CD4-positive, alpha-beta T cell (primary cell): ENCODE measurements at regions of chr3 and their contacts with region 1.

Region 1: GRCh38 chr3:25664810-25665314 is at the start of gene TOP2B:
- DNase-seq: peak; percentile 87 to 97 (median 92)
- ATAC-seq: peak; percentile 89
- H3K4me3 ChIP-seq: peak within 1 kb of the TSS; percentile 94
- H3K4me3 Mint-ChIP-seq: peak within 1 kb of the TSS; percentile 98
- H3K27ac ChIP-seq: peak within 1 kb of the TSS; percentile 92 to 93
- H3K27ac Mint-ChIP-seq: peak within 1 kb of the TSS; percentile 98
- H3K4me1 ChIP-seq: peaks cover 13% of the 10 kb centered on the region
- H3K4me1 Mint-ChIP-seq: peaks cover 49% of the 10 kb centered on the region
- H3K27me3 ChIP-seq: no peaks in the 10 kb centered on the region
- H3K27me3 Mint-ChIP-seq: no peaks in the 10 kb centered on the region
- CTCF ChIP-seq: no peak
- total RNA-seq, gene TOP2B: 79.7 to 80.4 TPM

Region 2: DNA sequence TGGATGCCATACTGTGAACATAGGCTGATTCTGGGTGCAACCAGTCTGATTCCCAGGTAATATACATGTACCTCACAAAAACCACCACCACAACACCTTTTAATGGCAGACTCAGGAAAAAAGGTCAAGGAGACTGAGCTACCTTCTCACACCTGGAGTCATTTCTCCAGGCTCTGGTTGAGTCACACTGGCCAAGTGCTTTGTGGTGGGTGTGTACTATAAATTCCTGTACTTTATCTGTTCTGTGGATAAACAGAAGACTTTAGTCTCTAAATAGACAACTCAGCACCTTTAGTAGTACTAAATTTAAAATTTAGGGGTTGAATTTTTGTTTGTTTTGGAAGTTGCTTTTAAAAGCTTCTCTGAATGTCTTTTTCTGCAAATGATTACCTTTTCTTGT is 46.8 kb before region 1 on chr3:
- CTCF ChIA-PET with region 1: no interaction called
- POLR2A ChIA-PET with region 1: no interaction called
- intact Hi-C with region 1: loop called in 1 of 2 experiments (anchors 2 kb)
- DNase-seq: no peak
- ATAC-seq: no peak
- H3K4me3 ChIP-seq: no peak overlapping the region
- H3K4me3 Mint-ChIP-seq: no peak overlapping the region
- H3K27ac ChIP-seq: no peak overlapping the region
- H3K27ac Mint-ChIP-seq: peak overlapping the region; percentile 56
- H3K4me1 ChIP-seq: no peaks in the 10 kb centered on the region
- H3K4me1 Mint-ChIP-seq: peaks cover 5% of the 10 kb centered on the region
- H3K27me3 ChIP-seq: no peaks in the 10 kb centered on the region
- H3K27me3 Mint-ChIP-seq: no peaks in the 10 kb centered on the region
- CTCF ChIP-seq: no peak

Region 3: DNA sequence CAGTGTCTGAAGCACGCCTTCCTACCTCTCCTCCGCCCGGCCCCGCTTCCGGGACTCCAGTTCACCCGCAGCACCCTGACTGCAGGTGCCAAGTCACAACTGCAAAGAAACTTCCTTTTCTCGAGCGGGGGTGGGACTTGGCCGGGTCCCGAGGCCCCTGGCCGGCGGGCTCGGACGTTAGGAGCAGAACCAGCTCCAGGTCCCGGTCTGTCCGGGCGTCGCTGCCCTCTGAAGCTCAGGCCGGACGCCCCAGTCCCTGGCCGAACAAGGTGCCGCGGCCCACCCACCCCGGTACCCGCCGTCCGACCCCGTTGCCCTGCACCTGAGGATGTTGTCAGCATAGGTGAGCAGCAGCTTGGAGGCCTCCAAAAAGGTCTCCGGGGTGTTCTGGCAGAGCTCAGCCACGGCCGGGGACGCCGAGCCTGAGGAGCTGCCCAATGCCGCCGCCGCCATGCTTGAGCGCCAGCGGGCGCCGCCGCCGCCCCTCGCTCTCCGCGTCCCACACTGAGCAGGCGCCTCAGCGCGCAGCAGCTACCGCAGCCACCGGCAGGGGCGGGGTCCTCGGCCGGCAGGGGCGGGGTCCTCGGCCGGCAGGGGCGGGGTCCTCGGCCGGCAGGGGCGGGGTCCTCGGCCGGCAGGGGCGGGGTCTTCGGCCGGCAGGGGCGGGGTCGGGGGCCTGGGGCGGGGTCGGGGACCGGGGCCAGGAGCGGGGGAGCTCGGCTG is 118.2 kb after region 1 on chr3 and contains the start of gene NGLY1:
- CTCF ChIA-PET with region 1: no interaction called
- POLR2A ChIA-PET with region 1: interaction called, 16 read pairs
- intact Hi-C with region 1: loop called (anchors 2 kb)
- DNase-seq: peak; percentile 71 to 93 (median 82)
- ATAC-seq: peak; percentile 89
- H3K4me3 ChIP-seq: peak within 1 kb of the TSS; percentile 82
- H3K4me3 Mint-ChIP-seq: peak within 1 kb of the TSS; percentile 96
- H3K27ac ChIP-seq: peak within 1 kb of the TSS; percentile 72 to 79
- H3K27ac Mint-ChIP-seq: peak within 1 kb of the TSS; percentile 96
- H3K4me1 ChIP-seq: peaks cover 26% of the 10 kb centered on the region
- H3K4me1 Mint-ChIP-seq: peaks cover 64% of the 10 kb centered on the region
- H3K27me3 ChIP-seq: no peaks in the 10 kb centered on the region
- H3K27me3 Mint-ChIP-seq: no peaks in the 10 kb centered on the region
- CTCF ChIP-seq: no peak
- total RNA-seq, gene NGLY1: 46.0 to 46.2 TPM

Region 4: GRCh38 chr3:26091096-26091495 is 426.2 kb after region 1 on chr3:
- CTCF ChIA-PET with region 1: no interaction called
- POLR2A ChIA-PET with region 1: no interaction called
- intact Hi-C with region 1: no loop called
- DNase-seq: no peak
- ATAC-seq: no peak
- H3K4me3 ChIP-seq: no peak overlapping the region
- H3K4me3 Mint-ChIP-seq: no peak overlapping the region
- H3K27ac ChIP-seq: no peak overlapping the region
- H3K27ac Mint-ChIP-seq: no peak overlapping the region
- H3K4me1 ChIP-seq: no peaks in the 10 kb centered on the region
- H3K4me1 Mint-ChIP-seq: no peaks in the 10 kb centered on the region
- H3K27me3 ChIP-seq: no peaks in the 10 kb centered on the region
- H3K27me3 Mint-ChIP-seq: no peaks in the 10 kb centered on the region
- CTCF ChIP-seq: no peak